Activated T-helper 2 cell treated with anti-CD3 and anti-CD28 coated beads, Interferon-gamma antibody, Interleukin-2, Interleukin-4, amounts not matched to agents 10 μg/mL and 5 μg/mL and 100 μg/mL, durations not matched to agents 14 hours and 24 hours and 36 hours (primary cell): ENCODE measurements at regions of chr13 and their contacts with region 1.

Region 1: GRCh38 chr13:36736119-36736726 is 62.4 kb downstream of the SERTM1 start:
- DNase-seq: no peak
- H3K4me3 Mint-ChIP-seq: no peak overlapping the region
- H3K27ac Mint-ChIP-seq: no peak overlapping the region
- H3K4me1 Mint-ChIP-seq: no peaks in the 10 kb centered on the region
- H3K27me3 Mint-ChIP-seq: peaks cover 2% of the 10 kb centered on the region

Region 2: GRCh38 chr13:36282818-36283445 is 453.3 kb before region 1 on chr13:
- intact Hi-C with region 1: loop called (anchors 5 kb)
- DNase-seq: no peak
- H3K4me3 Mint-ChIP-seq: no peak overlapping the region
- H3K27ac Mint-ChIP-seq: no peak overlapping the region
- H3K4me1 Mint-ChIP-seq: no peaks in the 10 kb centered on the region
- H3K27me3 Mint-ChIP-seq: peaks cover 8% of the 10 kb centered on the region

Region 3: GRCh38 chr13:36453516-36453915 is 282.7 kb before region 1 on chr13:
- intact Hi-C with region 1: loop called (anchors 10 kb)
- DNase-seq: no peak
- H3K4me3 Mint-ChIP-seq: no peak overlapping the region
- H3K27ac Mint-ChIP-seq: no peak overlapping the region
- H3K4me1 Mint-ChIP-seq: peaks cover 14% of the 10 kb centered on the region
- H3K27me3 Mint-ChIP-seq: peaks cover 14% of the 10 kb centered on the region

Region 4: GRCh38 chr13:36628728-36629385 is 107.4 kb before region 1 on chr13:
- intact Hi-C with region 1: no loop called
- DNase-seq: no peak
- H3K4me3 Mint-ChIP-seq: no peak overlapping the region
- H3K27ac Mint-ChIP-seq: no peak overlapping the region
- H3K4me1 Mint-ChIP-seq: no peaks in the 10 kb centered on the region
- H3K27me3 Mint-ChIP-seq: no peaks in the 10 kb centered on the region

Region 5: DNA sequence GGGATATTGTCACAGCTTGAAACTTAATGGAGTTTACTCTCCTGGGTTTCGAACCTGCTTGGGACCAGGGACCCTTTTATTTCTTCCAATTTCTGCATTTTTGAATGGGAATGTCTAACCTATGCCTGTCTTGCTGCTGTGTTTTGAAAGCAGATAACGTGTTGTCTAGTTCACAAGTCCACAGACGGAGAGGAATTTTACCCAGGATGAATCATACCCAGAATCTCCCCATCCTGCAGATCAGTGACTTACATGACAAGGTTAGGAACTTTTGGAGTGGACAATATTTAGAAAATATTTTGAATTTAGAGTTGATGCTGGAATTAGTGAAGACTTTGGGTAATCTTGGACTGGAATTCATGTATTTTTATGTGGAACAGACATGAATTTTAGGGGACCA is 14.2 kb after region 1 on chr13:
- intact Hi-C with region 1: no loop called
- DNase-seq: no peak
- H3K4me3 Mint-ChIP-seq: no peak overlapping the region
- H3K27ac Mint-ChIP-seq: no peak overlapping the region
- H3K4me1 Mint-ChIP-seq: no peaks in the 10 kb centered on the region
- H3K27me3 Mint-ChIP-seq: peaks cover 4% of the 10 kb centered on the region